ENCODE measurements at regions of chr17 and their contacts with region 1.

Region 1: GRCh38 chr17:2029911-2030778 is at the start of gene DPH1:
- DNase-seq: peak; percentile 91
- ATAC-seq: peak; percentile 89
- H3K4me3 Mint-ChIP-seq: peak within 1 kb of the TSS; percentile 88
- H3K27ac Mint-ChIP-seq: peak within 1 kb of the TSS; percentile 83
- H3K4me1 Mint-ChIP-seq: peaks cover 27% of the 10 kb centered on the region
- H3K27me3 Mint-ChIP-seq: peaks cover 20% of the 10 kb centered on the region
- CTCF ChIP-seq: no peak
- total RNA-seq, gene DPH1: 27.8 to 32.5 TPM

Region 2: GRCh38 chr17:1882836-1883235 is 147.3 kb before region 1 on chr17:
- CTCF ChIA-PET with region 1: interaction called, 14 read pairs
- POLR2A ChIA-PET with region 1: no interaction called
- intact Hi-C with region 1: no loop called
- DNase-seq: peak; percentile 52
- ATAC-seq: peak; percentile 53
- H3K4me3 Mint-ChIP-seq: no peak overlapping the region
- H3K27ac Mint-ChIP-seq: no peak overlapping the region
- H3K4me1 Mint-ChIP-seq: no peaks in the 10 kb centered on the region
- H3K27me3 Mint-ChIP-seq: no peaks in the 10 kb centered on the region
- CTCF ChIP-seq: peak; percentile 53

Region 3: GRCh38 chr17:1908699-1909309 is 121.3 kb before region 1 on chr17:
- CTCF ChIA-PET with region 1: interaction called, 9 read pairs
- POLR2A ChIA-PET with region 1: interaction called, 3 read pairs
- intact Hi-C with region 1: loop called (anchors 5 kb)
- DNase-seq: peak; percentile 62
- ATAC-seq: peak; percentile 74
- H3K4me3 Mint-ChIP-seq: no peak overlapping the region
- H3K27ac Mint-ChIP-seq: no peak overlapping the region
- H3K4me1 Mint-ChIP-seq: peaks cover 7% of the 10 kb centered on the region
- H3K27me3 Mint-ChIP-seq: peaks cover 51% of the 10 kb centered on the region
- CTCF ChIP-seq: peak; percentile 65

Region 4: DNA sequence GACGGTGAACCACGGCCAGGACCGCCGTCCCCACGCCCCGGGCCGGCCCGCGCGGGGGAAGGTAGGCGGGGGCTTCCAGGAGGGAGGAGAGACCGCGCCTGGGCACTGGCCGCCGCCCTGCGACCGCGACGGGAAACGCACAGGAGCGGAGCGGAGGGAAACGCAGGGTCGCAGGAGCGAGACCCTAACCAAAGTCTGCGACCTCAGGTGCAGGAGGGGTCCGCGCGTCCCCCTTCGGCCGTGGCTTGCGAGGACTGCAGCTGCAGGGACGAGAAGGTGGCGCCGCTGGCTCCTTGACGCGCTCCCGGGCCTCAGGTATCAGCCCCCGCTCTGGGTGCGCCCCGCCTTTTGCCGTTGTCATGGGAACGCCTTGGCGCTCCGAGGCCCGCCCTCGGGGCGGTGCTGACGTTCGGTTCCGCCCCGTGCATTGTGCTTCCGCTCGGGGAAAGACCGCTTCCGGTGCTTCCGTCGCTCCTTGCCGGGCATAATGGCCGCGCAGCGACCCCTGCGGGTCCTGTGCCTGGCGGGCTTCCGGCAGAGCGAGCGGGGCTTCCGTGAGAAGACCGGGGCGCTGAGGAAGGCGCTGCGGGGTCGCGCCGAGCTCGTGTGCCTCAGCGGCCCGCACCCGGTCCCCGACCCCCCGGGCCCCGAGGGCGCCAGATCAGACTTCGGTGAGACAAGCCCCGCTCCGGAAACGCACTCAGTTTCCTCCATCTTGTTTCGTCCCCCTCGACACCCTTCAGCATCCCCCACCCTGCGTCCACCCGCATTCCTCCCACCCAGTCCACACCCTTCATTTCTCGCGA is 11.6 kb after region 1 on chr17 and contains the start of gene OVCA2:
- CTCF ChIA-PET with region 1: interaction called, 8 read pairs
- POLR2A ChIA-PET with region 1: interaction called, 30 read pairs
- intact Hi-C with region 1: no loop called
- DNase-seq: peak; percentile 97
- ATAC-seq: peak; percentile 93
- H3K4me3 Mint-ChIP-seq: peak within 1 kb of the TSS; percentile 94
- H3K27ac Mint-ChIP-seq: peak within 1 kb of the TSS; percentile 97
- H3K4me1 Mint-ChIP-seq: peaks cover 20% of the 10 kb centered on the region
- H3K27me3 Mint-ChIP-seq: no peaks in the 10 kb centered on the region
- CTCF ChIP-seq: no peak
- total RNA-seq, gene OVCA2: 28.0 to 28.5 TPM